Endothelial cell of umbilical vein (primary cell): ENCODE measurements at regions of chr18 and their contacts with region 1.

Region 1: GRCh38 chr18:11040823-11041656 is 108.3 kb downstream of the PIEZO2 start:
- DNase-seq: peak; percentile 64
- H3K4me3 ChIP-seq: no peak overlapping the region
- H3K27ac ChIP-seq: no peak overlapping the region
- H3K4me1 ChIP-seq: peaks cover 23% of the 10 kb centered on the region
- H3K27me3 ChIP-seq: no peaks in the 10 kb centered on the region
- CTCF ChIP-seq: peak; percentile 71 to 81
- POLR2A ChIP-seq: no peak

Region 2: GRCh38 chr18:9561759-9562158 is 1479.3 kb before region 1 on chr18:
- CTCF ChIA-PET with region 1: no interaction called
- POLR2A ChIA-PET with region 1: no interaction called
- dilution Hi-C with region 1: no loop called
- intact Hi-C with region 1: no loop called
- DNase-seq: no peak
- H3K4me3 ChIP-seq: no peak overlapping the region
- H3K27ac ChIP-seq: no peak overlapping the region
- H3K4me1 ChIP-seq: no peaks in the 10 kb centered on the region
- H3K27me3 ChIP-seq: no peaks in the 10 kb centered on the region
- CTCF ChIP-seq: no peak
- POLR2A ChIP-seq: no peak

Region 3: GRCh38 chr18:10787293-10787901 is 253.6 kb before region 1 on chr18:
- CTCF ChIA-PET with region 1: interaction called, 6 read pairs
- POLR2A ChIA-PET with region 1: no interaction called
- dilution Hi-C with region 1: no loop called
- intact Hi-C with region 1: loop called (anchors 1 kb)
- DNase-seq: peak; percentile 72
- H3K4me3 ChIP-seq: no peak overlapping the region
- H3K27ac ChIP-seq: no peak overlapping the region
- H3K4me1 ChIP-seq: no peaks in the 10 kb centered on the region
- H3K27me3 ChIP-seq: peaks cover 0 to 2% of the 10 kb centered on the region in 2 experiments
- CTCF ChIP-seq: peak; percentile 82 to 87
- POLR2A ChIP-seq: no peak

Region 4: GRCh38 chr18:10928772-10929373 is 112.2 kb before region 1 on chr18:
- CTCF ChIA-PET with region 1: interaction called, 15 read pairs
- POLR2A ChIA-PET with region 1: no interaction called
- dilution Hi-C with region 1: no loop called
- intact Hi-C with region 1: loop called (anchors 1 kb)
- DNase-seq: no peak
- H3K4me3 ChIP-seq: no peak overlapping the region
- H3K27ac ChIP-seq: peak overlapping the region; percentile 93
- H3K4me1 ChIP-seq: peaks cover 40% of the 10 kb centered on the region
- H3K27me3 ChIP-seq: no peaks in the 10 kb centered on the region
- CTCF ChIP-seq: no peak
- POLR2A ChIP-seq: no peak

Region 5: DNA sequence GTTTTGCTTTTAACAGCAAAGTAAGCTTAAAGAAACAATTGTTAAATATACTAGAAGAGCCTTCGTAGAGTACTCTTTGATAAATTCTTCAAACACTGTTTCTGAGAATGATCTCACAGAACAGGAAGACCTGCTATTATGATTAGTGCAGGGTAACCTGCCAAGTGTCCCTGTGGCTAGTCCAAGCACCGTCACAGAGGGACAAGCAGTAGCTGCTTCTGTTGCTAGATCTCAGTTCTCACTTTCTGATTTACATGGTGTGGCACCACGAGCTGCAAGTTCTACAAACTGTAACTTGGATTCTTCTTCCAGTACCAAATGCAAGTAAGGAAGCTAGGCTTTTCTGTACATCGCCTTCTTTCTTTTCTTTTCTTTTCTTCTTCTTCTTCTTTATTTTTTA is 13.2 kb before region 1 on chr18:
- CTCF ChIA-PET with region 1: interaction called, 13 read pairs
- POLR2A ChIA-PET with region 1: no interaction called
- dilution Hi-C with region 1: no loop called
- intact Hi-C with region 1: no loop called
- DNase-seq: peak; percentile 15
- H3K4me3 ChIP-seq: no peak overlapping the region
- H3K27ac ChIP-seq: no peak overlapping the region
- H3K4me1 ChIP-seq: peaks cover 12% of the 10 kb centered on the region
- H3K27me3 ChIP-seq: no peaks in the 10 kb centered on the region
- CTCF ChIP-seq: no peak
- POLR2A ChIP-seq: no peak

Region 6: DNA sequence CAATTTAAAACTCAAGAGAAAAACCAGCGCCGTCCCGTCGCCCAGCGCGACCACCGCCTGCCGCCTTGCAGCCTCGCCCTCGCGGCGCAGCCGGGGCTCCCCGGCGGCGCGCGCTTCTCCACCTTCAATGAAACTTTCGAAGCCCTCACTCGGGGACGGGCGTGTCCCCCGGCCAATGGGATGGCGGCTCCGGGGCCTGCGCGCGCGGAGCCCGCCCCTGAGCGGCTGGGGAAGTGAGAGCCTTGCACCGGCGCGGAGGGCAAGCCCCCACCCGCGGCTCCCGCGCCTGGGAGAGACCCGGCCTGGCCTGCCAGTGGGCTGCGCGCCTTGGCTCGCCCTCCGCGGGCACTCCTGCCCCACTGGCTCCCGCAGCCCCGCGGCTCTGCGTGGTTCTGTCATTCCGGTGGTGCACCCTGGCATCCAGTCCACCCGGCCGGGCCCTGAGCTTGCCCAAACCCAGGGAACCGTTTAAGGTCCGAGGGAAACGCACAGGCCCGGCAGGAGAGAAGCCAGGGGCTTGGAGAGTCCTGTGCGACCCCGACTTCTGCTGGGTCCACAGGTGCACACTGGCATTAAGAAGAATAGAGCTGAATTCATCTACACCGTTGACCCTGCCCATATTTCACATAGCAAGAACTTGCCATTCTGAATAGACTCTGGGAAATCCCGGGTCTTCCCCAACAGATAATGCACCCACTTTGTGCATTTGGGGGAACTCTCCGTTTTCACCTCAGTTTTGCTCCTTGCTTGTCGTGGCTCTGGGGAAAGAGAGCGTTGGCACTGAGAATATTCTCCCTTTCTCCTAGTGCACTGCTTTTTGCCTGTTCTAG is 108.6 kb after region 1 on chr18 and contains the start of gene PIEZO2:
- CTCF ChIA-PET with region 1: interaction called, 16 read pairs
- POLR2A ChIA-PET with region 1: no interaction called
- dilution Hi-C with region 1: no loop called
- intact Hi-C with region 1: loop called (anchors 2 kb)
- DNase-seq: peak; percentile 29
- H3K4me3 ChIP-seq: peak within 1 kb of the TSS in 2 of 3 experiments; percentile 21 to 25
- H3K27ac ChIP-seq: no peak within 1 kb of the TSS
- H3K4me1 ChIP-seq: no peaks in the 10 kb centered on the region
- H3K27me3 ChIP-seq: peaks cover 44 to 47% of the 10 kb centered on the region in 2 experiments
- CTCF ChIP-seq: no peak
- POLR2A ChIP-seq: no peak
- total RNA-seq, gene PIEZO2: 5.0 and 11.2 TPM in 2 replicates